Activated CD4-positive, alpha-beta memory T cell treated with anti-CD3 and anti-CD28 coated beads, Interleukin-2, amount 10 ng/mL, durations not matched to agents 7 days and 5 days (primary cell): ENCODE measurements at regions of chr16 and their contacts with region 1.

Region 1: DNA sequence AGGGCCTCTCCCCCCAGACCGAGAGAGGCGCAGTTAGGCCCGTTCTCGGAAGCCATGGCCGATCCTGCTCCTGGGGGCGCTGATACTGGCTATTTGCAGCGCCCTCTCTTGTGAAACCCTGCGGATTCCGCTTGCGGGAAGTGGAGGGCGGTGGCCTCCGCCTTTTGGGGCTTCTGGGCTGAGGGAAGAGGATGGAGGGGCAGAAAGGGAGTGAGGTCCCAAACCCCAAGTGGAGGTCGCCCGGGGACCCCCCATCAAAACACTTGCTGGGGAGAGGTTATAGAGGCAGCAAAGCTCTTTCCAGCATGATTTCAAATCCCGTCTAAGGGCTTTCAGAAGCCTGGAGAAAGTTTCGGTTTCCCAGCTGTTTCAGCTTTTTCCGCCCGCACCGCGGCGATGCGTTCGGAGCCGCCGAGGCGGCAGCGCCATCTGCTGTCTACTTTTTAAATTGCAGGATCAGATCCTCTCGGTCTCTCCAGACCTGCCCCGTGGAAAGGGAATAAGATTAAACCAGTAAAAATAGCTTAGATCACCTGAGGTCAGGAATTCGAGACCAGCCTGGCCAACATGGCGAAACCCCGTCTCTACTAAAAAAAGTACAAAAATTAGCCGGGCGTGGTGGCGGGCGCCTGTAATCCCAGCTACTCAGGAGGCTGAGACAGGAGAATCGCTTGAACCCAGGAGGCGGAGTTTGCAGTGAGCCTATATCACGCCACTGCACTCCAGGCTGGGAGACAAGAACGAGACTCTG is 15.8 kb downstream of the SNX20 start:
- DNase-seq: peak; percentile 88
- H3K4me3 Mint-ChIP-seq: peak overlapping the region; percentile 57
- H3K27ac Mint-ChIP-seq: peak overlapping the region; percentile 94
- H3K4me1 Mint-ChIP-seq: peaks cover 47% of the 10 kb centered on the region
- H3K27me3 Mint-ChIP-seq: no peaks in the 10 kb centered on the region

Region 2: DNA sequence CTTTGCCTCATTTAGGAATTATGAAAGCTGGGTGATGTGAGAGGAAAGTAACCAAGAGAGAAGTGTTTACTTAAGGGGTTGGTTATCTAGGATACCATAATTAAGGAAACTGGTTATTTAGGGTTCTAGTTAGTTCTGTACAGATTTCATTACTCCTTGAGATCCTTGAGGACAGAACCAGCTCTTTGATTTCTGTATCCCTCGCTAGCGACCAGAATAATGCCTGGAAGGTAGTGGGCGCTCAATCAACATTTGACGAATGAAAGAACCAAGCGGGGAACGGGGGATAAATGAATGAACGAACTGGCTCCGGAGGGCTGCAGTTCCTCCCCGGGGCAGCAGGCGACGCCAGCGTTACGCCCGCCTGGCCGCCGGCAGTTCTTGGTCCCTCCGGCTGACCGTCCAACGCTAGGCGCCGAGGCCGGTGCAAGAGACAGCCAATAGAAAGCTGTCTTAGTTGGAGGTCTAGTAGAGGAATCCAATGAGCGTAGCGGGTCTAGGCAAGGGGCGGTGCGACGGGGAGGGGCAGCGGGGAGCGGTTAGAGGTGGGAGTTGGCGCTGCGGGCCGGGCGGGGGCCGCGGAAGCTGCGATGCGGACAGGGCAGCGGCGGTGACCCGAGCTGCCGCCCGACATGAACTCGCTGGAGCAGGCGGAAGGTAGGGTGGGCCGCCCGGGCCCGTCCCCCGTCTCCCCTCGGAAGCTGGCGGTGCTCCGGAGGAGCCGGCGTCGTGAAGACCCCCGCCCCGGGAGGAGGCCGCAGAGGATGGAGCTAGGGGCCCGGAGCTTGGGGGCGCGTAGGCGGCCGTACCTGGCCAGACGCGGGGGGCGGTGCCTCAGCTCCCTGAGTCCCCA is 640.4 kb before region 1 on chr16 and contains the start of gene CNEP1R1:
- CTCF ChIA-PET with region 1: interaction called, 39 read pairs
- POLR2A ChIA-PET with region 1: interaction called, 6 read pairs
- DNase-seq: peak; percentile 95
- H3K4me3 Mint-ChIP-seq: peak within 1 kb of the TSS; percentile 96
- H3K27ac Mint-ChIP-seq: peak within 1 kb of the TSS; percentile 87
- H3K4me1 Mint-ChIP-seq: peaks cover 29% of the 10 kb centered on the region
- H3K27me3 Mint-ChIP-seq: peaks cover 5% of the 10 kb centered on the region
- total RNA-seq, gene CNEP1R1: 30.1 to 36.1 TPM

Region 3: GRCh38 chr16:50354629-50355456 is 310.5 kb before region 1 on chr16:
- CTCF ChIA-PET with region 1: interaction called, 34 read pairs
- POLR2A ChIA-PET with region 1: no interaction called
- DNase-seq: no peak
- H3K4me3 Mint-ChIP-seq: no peak overlapping the region
- H3K27ac Mint-ChIP-seq: no peak overlapping the region
- H3K4me1 Mint-ChIP-seq: peaks cover 30% of the 10 kb centered on the region
- H3K27me3 Mint-ChIP-seq: no peaks in the 10 kb centered on the region

Region 4: DNA sequence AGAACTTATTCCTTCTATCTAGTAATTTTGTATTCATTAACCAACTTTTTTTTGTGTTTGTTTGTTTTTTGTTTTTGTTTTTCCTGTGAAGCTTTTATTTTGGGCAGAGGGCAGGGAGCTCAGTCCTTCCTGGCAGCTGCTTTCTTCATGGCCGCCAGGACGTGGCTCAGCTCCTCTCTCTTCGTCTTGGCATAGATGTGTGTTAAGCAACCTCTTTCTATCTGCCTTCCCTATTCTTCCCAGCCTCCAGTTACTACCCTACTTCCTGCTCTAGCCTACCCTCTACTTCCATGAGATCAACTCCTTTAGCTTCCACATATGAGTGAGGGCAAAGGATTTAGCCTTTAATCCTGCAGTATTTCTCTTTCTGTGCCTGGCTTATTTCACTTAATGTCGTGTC is 288.3 kb before region 1 on chr16:
- CTCF ChIA-PET with region 1: interaction called, 10 read pairs
- POLR2A ChIA-PET with region 1: no interaction called
- DNase-seq: no peak
- H3K4me3 Mint-ChIP-seq: no peak overlapping the region
- H3K27ac Mint-ChIP-seq: no peak overlapping the region
- H3K4me1 Mint-ChIP-seq: no peaks in the 10 kb centered on the region
- H3K27me3 Mint-ChIP-seq: peaks cover 17% of the 10 kb centered on the region

Region 5: DNA sequence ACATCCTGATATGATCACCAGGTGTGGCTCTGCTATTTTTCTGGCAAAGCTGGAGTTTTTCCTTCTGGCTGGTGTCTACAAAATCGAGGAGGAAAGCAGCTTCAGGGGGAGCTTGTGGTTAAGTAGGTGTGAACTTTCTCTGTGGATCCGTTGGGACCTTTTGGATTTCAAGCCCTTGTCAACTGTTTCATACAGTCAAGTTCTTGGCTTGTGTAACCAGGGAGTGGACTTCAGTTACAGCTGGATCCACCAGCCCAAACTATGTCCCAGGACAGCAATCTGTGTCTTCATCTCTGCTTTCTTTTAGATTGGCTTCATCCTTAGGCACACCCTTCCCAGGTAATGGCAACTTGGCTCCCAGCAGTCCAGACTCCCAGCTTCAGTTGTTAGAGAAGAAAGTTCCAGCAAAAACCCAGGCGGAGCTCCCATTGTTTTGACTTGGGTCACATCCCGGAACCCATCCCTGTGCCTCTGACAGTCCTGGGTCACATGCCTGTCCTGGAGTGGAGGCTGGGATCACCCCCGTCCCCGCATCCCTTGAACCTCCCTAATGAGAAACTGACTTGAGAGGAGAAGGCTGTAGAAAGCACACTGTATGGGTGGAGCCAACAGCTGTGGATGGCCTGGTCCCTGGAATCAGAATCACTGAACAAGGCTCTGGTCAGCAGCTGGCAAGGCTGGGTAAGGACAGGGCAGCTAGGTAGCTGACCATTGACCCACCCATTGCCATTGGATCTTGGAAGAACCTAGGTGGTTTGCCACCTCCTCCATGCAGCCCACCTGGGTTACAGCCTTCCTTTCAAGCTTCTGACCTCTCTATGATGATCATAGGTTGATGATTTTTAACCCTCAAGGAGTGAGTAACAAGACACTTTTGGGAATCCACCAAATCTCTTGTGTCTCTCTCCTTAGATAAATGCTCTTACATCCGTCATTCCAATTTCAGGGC is 99.0 kb before region 1 on chr16:
- CTCF ChIA-PET with region 1: no interaction called
- POLR2A ChIA-PET with region 1: no interaction called
- DNase-seq: no peak
- H3K4me3 Mint-ChIP-seq: no peak overlapping the region
- H3K27ac Mint-ChIP-seq: no peak overlapping the region
- H3K4me1 Mint-ChIP-seq: no peaks in the 10 kb centered on the region
- H3K27me3 Mint-ChIP-seq: no peaks in the 10 kb centered on the region

Region 6: DNA sequence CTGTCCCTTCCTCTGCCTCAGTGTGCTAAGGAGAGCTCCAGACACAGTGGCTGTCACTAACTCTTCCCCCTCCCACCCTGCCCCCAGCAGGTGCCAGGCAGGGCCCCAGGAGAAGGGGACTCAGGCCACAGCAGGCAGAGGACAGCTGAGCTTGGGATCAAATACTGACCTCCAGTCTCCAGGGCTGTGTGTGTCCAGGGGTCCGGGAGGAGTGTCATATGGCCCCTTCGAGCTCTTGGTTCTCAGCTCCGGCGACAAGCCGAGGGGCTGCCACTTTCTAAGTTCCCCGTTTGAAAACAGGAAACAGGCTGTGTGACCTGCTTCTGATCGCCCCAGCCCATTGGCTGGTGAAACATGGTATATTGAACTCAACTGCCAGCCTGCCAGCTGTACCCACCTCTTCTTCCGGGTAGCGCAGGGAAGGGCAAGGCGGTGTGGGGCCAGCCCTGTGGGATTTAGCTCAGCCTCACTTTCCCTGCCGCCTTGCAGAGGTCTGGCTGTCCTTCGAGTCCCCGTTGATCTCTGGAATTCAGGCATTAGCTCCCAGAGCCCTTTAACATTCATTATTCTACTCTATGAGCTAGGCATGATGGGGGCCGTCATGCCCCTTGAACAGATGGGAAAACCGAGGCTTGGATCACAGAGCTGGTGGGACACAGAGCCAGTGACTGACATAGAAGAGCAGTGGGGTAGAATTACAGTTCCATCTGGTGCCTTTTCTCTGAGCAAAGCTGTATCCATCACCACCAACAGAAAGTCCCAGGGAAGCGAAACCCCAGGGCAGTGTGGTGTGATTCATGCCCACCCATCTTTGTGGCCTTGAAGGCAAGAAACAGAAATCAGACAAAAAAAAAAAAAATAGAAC is 15.9 kb after region 1 on chr16 and contains the start of gene SNX20:
- CTCF ChIA-PET with region 1: interaction called, 266 read pairs
- POLR2A ChIA-PET with region 1: interaction called, 144 read pairs
- DNase-seq: peak; percentile 78
- H3K4me3 Mint-ChIP-seq: peak within 1 kb of the TSS; percentile 91
- H3K27ac Mint-ChIP-seq: peak within 1 kb of the TSS; percentile 86
- H3K4me1 Mint-ChIP-seq: peaks cover 91% of the 10 kb centered on the region
- H3K27me3 Mint-ChIP-seq: no peaks in the 10 kb centered on the region
- total RNA-seq, gene SNX20: 94.7 to 97.7 TPM

Region 7: GRCh38 chr16:50756473-50756872 is 91.2 kb after region 1 on chr16:
- CTCF ChIA-PET with region 1: interaction called, 240 read pairs
- POLR2A ChIA-PET with region 1: interaction called, 3 read pairs
- DNase-seq: no peak
- H3K4me3 Mint-ChIP-seq: no peak overlapping the region
- H3K27ac Mint-ChIP-seq: no peak overlapping the region
- H3K4me1 Mint-ChIP-seq: peaks cover 68% of the 10 kb centered on the region
- H3K27me3 Mint-ChIP-seq: no peaks in the 10 kb centered on the region

Region 8: GRCh38 chr16:50806099-50807062 is 141.1 kb after region 1 on chr16:
- CTCF ChIA-PET with region 1: interaction called, 288 read pairs
- POLR2A ChIA-PET with region 1: interaction called, 17 read pairs
- DNase-seq: peak; percentile 87
- H3K4me3 Mint-ChIP-seq: peak overlapping the region; percentile 63
- H3K27ac Mint-ChIP-seq: peak overlapping the region; percentile 57
- H3K4me1 Mint-ChIP-seq: peaks cover 12% of the 10 kb centered on the region
- H3K27me3 Mint-ChIP-seq: no peaks in the 10 kb centered on the region